Psoas muscle (tissue), 8 donors: ENCODE measurements at regions of chr2 and their contacts with region 1.

Region 1: GRCh38 chr2:8671802-8672201 is 10.1 kb upstream of the ID2 start:
- DNase-seq: no peak
- ATAC-seq: no peak
- H3K4me3 ChIP-seq: no peak overlapping the region
- H3K27ac ChIP-seq: no peak overlapping the region
- H3K4me1 ChIP-seq: peaks cover 11% of the 10 kb centered on the region
- H3K27me3 ChIP-seq: no peaks in the 10 kb centered on the region
- CTCF ChIP-seq: no peak

Region 2: DNA sequence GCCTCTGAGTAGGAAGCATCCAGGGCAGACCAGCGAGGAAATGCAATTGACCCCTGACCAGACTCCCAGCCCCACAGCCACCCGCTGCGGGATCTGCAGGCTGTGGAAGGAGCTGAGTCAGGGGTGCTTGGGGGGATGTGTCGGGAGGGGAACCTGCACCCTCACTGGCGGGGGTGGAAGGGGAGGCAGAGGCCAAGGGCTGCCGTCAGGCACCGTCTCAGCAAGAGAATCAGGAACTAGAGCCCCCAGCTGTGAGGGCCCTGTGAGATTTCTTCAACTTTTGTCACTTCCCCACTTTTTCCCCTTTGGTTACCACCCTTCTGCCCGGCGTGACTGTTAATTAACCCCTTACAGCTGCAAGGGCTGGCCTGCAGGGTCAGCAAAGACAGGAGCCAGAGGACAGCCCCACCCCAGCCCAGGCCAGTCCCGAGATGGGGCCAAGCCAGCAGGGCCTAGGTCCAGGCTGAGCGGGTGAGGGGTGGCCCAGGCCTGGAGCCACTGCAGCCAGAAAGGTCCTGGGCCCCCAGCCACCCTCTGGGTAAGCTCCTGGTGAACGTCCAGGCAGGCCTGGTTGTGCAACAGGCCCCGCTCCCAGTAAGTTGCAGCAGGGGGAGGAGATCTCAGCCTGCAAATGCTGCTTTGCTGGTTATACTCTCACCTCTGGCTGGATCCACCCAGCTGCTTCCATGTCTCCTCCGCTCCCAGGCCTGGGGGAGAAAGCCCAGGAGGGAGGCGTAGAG is 136.9 kb before region 1 on chr2:
- intact Hi-C with region 1: loop called in 1 of 2 experiments (anchors 5 kb)
- DNase-seq: peak; percentile 78 to 85
- ATAC-seq: peak; percentile 57 to 84 (median 77)
- H3K4me3 ChIP-seq: no peak overlapping the region
- H3K27ac ChIP-seq: no peak overlapping the region
- H3K4me1 ChIP-seq: peaks cover 10% of the 10 kb centered on the region
- H3K27me3 ChIP-seq: no peaks in the 10 kb centered on the region
- CTCF ChIP-seq: no peak